ENCODE measurements at regions of chr11 and their contacts with region 1.

Region 1: DNA sequence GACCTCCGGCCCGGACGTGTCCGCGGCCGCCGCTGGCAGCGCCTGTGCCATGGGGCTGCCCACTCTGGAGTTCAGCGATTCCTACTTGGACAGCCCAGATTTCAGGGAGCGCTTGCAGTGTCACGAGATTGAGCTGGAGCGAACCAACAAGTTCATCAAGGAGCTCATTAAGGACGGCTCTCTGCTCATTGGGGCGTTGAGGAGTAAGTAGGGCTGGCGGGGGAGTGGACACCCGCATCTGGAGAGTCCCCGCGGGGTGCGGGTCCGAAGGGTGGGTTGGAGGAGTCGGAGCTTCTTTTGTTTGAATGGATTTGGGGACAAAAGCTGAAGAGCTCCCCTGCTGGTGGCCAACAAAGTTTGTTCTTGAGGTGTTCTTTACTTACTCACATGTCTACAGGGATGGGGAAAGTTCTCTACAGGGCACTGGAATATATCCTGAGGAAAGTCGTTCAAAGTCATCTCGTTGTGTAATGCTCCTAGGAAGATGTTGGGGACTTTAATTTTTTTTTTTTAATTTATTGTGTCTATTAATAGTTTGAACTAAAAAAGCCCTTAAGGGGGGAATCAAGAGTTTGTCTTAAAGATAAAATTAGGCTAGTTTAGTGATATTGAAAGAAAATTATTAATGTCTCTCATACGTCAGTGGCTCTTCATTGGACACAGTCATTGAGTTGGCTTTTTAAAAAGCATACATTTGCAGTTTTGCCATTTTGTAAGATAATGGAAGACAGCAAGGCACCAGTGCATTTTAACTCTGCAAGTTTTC is 725 bp downstream of the ARHGAP42 start:
- DNase-seq: peak; percentile 42
- H3K4me3 ChIP-seq: peak overlapping the region; percentile 60 to 70
- H3K27ac ChIP-seq: peak overlapping the region; percentile 59 to 74
- H3K4me1 ChIP-seq: no peaks in the 10 kb centered on the region
- H3K27me3 ChIP-seq: no peaks in the 10 kb centered on the region
- CTCF ChIP-seq: peak; percentile 21 to 63 (median 56)
- POLR2A ChIP-seq: no peak

Region 2: DNA sequence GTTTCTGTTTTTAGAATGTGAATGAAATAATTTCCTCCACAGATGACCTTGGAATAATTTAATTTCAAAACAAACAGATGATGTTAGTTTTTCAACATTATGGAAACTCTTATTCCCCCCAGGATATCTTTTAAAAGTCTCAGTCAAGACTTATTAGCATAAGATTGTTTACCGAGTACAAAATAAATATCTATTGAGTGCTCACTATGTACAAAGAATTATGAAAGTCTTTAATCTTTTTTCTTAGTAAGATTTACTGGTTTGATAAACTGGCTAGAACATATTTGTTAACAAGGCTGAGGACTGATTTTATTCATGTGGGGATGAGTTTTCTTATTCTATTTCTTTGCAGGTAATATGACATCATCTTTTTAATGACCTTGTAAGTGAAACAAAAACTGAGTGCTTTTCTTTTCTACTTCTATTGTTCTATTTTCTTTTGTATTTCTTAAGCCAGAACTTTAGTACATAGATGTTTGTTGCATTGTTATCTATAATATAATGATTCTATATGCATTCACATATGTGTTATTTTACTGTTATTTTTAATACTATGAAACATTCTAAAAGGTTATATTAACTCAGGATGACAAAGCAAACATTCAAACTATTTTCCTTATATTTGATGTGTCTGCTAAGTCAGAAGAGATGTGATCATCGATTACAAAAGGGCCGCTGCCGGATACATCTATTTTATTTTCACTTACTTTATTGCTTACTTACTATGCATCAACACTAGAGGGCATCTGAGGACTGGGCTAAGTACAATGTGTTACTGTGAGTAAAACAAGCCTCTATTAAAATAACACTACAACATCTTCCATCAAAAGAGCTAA is 111.7 kb before region 1 on chr11:
- intact Hi-C with region 1: loop called (anchors 5 kb)
- DNase-seq: peak; percentile 25
- H3K4me3 ChIP-seq: no peak overlapping the region
- H3K27ac ChIP-seq: no peak overlapping the region
- H3K4me1 ChIP-seq: no peaks in the 10 kb centered on the region
- H3K27me3 ChIP-seq: no peaks in the 10 kb centered on the region
- CTCF ChIP-seq: peak in 3 of 4 experiments; percentile 70 to 86 (median 85)
- POLR2A ChIP-seq: no peak

Region 3: GRCh38 chr11:100855466-100856067 is 167.8 kb after region 1 on chr11:
- intact Hi-C with region 1: loop called (anchors 5 kb)
- DNase-seq: no peak
- H3K4me3 ChIP-seq: no peak overlapping the region
- H3K27ac ChIP-seq: no peak overlapping the region
- H3K4me1 ChIP-seq: no peaks in the 10 kb centered on the region
- H3K27me3 ChIP-seq: no peaks in the 10 kb centered on the region
- CTCF ChIP-seq: peak; percentile 37 to 80 (median 74)
- POLR2A ChIP-seq: no peak

Region 4: DNA sequence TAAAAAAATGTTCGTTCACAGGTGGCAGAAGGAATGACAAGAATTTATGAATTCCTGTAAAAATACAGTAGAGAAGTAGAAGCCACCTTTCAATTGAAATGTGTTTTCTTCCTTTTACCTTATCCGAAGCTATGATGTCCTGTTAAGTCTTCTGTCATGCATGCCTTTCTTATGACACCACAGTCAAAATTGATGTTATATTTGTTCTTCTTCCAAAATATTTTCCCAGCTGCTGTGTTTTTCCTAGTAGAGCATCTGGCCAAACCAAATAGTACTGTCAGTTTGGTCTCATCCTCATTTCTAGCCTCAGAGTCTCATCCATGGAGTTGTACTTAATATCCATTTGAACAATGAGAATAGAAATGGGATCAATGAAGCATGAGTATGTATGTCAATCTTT is 235.7 kb after region 1 on chr11:
- intact Hi-C with region 1: loop called (anchors 5 kb)
- DNase-seq: no peak
- H3K4me3 ChIP-seq: no peak overlapping the region
- H3K27ac ChIP-seq: no peak overlapping the region
- H3K4me1 ChIP-seq: no peaks in the 10 kb centered on the region
- H3K27me3 ChIP-seq: no peaks in the 10 kb centered on the region
- CTCF ChIP-seq: no peak
- POLR2A ChIP-seq: no peak